Ascending aorta (tissue), 2 donors: ENCODE measurements at regions of chr17 and their contacts with region 1.

Region 1: GRCh38 chr17:44864866-44865660 is 17.4 kb downstream of the HIGD1B start:
- DNase-seq: peak in 1 of 2 donors; percentile 75
- H3K4me3 ChIP-seq: no peak overlapping the region
- H3K27ac ChIP-seq: no peak overlapping the region
- H3K4me1 ChIP-seq: no peaks in the 10 kb centered on the region
- H3K27me3 ChIP-seq: no peaks in the 10 kb centered on the region
- CTCF ChIP-seq: peak; percentile 84 to 88 (median 84)

Region 2: DNA sequence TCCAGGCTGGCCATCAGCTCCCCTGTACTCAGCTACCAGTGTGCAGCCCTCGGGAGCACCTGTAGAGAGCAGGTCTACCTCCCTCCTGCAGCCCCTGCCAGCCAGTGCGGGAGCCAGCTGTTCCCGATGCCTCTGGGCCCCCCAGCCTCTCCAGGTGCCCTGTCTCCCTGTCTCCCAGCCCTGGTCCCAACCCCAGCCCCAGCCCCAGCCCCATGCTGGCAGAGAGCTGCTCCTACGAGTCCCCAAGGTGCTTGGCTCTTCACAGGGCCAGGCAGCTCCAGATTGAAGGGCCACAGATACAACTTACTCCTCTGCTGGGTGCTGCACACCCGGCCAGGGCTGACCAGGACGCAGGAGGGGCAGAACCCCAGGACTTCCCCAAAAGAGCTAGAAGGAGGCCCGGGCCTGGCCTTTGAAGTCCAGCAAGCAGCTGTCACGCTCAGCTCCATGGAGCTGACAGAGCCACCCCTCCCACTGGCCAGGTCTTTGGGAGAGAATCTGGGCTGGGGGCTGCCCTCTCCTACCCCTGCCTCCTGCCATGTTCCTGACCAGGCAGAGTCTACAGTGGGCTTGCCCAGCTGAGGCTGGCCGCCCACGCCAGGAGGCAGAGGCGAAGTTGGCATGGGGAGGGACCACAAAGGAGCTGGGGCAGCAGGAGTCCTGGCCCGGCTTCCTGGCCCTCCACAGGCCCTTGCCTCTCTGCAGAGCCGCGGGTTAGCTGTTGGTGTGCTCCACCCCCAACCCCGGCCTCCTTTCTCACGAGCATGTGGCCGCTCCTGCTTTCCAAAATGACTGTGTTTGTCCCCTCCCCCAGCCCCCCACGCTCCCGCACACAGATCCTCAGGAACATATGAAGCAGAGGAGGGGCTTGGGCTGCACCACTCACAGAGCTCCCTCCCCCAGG is 115.7 kb before region 1 on chr17:
- intact Hi-C with region 1: no loop called
- DNase-seq: no peak
- H3K4me3 ChIP-seq: peak overlapping the region; percentile 8 to 47
- H3K27ac ChIP-seq: no peak overlapping the region
- H3K4me1 ChIP-seq: no peaks in the 10 kb centered on the region
- H3K27me3 ChIP-seq: no peaks in the 10 kb centered on the region
- CTCF ChIP-seq: no peak

Region 3: GRCh38 chr17:44829523-44830358 is 35.3 kb before region 1 on chr17 and contains the start of gene GJC1:
- intact Hi-C with region 1: loop called (anchors 5 kb)
- DNase-seq: no peak
- H3K4me3 ChIP-seq: peak within 1 kb of the TSS; percentile 79 to 86
- H3K27ac ChIP-seq: peak within 1 kb of the TSS; percentile 62 to 85
- H3K4me1 ChIP-seq: peaks cover 2 to 4% of the 10 kb centered on the region in 2 donors
- H3K27me3 ChIP-seq: peaks cover 7% of the 10 kb centered on the region
- CTCF ChIP-seq: no peak
- total RNA-seq, gene GJC1: 9.9 TPM